Calu3 (cell line): ENCODE measurements at regions of chr3 and their contacts with region 1.

Region 1: GRCh38 chr3:4350789-4351163 is 47.6 kb downstream of the SETMAR start:
- DNase-seq: peak; percentile 28
- H3K4me3 Mint-ChIP-seq: no peak overlapping the region
- H3K27ac Mint-ChIP-seq: no peak overlapping the region
- H3K4me1 Mint-ChIP-seq: peaks cover 7% of the 10 kb centered on the region
- H3K27me3 Mint-ChIP-seq: no peaks in the 10 kb centered on the region
- CTCF ChIP-seq: peak; percentile 63

Region 2: DNA sequence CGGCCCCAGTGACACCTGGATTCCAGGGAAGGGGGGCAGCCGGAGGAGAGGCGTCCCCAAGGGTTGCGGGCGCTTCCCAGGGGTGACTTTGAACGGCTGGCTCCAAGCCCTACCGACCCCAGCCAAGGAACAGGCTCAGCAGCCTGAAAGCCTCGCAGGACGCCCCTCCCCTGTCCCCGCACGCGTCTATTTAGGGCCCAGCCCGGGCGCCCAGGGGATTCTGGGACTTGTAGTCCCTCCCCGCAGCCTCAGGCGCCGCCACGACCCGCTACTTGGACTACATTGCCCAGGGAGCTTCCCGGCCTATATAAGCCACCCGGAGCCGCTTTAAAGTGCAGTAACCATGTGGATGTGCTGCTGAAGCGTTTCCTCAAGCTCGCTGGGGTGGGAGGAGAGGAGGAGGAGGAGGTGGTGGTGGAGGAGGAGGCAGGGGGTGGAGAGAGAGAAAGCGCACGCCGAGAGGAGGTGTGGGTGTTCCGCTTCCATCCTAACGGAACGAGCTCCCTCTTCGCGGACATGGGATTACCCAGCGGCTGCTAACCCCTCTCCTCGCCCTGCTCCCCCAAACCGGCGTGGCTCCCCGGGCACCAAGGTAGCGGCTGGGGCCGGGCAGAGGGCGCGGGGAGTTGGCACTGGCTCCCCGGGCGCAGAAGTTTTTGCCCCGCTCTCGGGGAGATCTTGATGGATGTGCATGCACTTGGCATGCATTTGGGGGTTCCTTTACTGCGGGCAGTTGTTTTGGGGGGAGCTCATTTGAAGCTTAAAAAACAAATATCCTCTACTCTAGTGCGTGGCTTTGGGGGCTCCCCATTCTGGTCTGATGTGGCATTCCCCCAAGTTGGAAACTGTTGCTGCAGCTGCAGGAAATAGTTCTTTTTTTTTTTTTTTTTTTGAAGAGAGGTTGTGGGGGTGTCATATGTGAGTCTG is 142.5 kb after region 1 on chr3 and contains the start of gene ITPR1:
- CTCF ChIA-PET with region 1: interaction called, 3 read pairs
- intact Hi-C with region 1: loop called (anchors 5 kb)
- DNase-seq: peak; percentile 93
- H3K4me3 Mint-ChIP-seq: peak within 1 kb of the TSS; percentile 74
- H3K27ac Mint-ChIP-seq: peak within 1 kb of the TSS; percentile 54
- H3K4me1 Mint-ChIP-seq: peaks cover 7% of the 10 kb centered on the region
- H3K27me3 Mint-ChIP-seq: peaks cover 66% of the 10 kb centered on the region
- CTCF ChIP-seq: no peak
- total RNA-seq, gene ITPR1: 4.2 and 6.2 TPM in 2 replicates

Region 3: DNA sequence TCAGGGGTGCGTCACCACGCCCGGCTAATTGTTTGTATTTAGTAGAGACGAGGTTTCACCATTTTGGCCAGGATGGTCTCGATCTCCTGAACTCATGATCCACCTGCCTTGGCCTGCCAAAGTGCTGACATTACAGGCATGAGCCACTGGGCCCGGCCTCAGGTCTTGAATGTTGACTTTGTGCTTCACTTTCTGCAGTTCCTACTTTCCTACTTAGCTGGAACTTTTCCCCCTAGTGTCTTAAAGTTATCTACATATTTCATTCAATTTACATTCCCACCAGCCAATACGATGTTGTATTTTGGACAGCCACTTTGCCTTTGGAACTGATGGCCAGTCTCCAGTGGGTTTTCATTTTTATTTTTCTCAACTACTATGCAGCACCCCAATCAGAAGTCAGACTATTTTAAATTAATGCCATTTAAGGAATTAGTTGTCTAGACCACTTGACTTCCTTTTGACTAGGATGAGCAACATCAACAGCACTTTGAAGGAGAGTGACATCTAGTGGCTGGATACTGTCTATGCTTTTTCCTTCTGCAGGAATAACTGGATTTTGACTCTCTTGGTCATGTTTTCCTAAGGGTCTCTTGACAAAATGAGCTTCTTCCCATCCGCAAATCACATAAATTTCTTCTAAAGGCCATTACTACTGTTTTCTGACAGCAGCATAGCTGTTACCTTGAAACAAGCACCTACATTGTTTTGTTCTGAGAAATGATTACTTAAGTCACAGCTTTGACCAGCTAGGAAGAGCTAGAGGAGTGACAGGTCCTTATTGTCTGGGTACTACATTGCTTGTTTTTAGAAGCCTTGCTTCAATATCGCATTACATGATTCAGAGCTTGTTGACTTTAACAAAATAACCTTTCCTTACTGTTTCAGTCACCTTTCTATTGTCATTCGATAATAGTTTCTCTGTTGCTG is 282.6 kb after region 1 on chr3:
- CTCF ChIA-PET with region 1: interaction called, 18 read pairs
- intact Hi-C with region 1: loop called (anchors 1 kb)
- DNase-seq: peak; percentile 19
- H3K4me3 Mint-ChIP-seq: no peak overlapping the region
- H3K27ac Mint-ChIP-seq: no peak overlapping the region
- H3K4me1 Mint-ChIP-seq: no peaks in the 10 kb centered on the region
- H3K27me3 Mint-ChIP-seq: peaks cover 14% of the 10 kb centered on the region
- CTCF ChIP-seq: peak; percentile 38